ENCODE measurements at regions of chr4 and their contacts with region 1.

Region 1: GRCh38 chr4:113394730-113395530 is 345.5 kb downstream of the ANK2 start:
- DNase-seq: no peak
- H3K4me3 ChIP-seq: no peak overlapping the region
- H3K27ac ChIP-seq: no peak overlapping the region
- H3K4me1 ChIP-seq: peaks cover 4 to 10% of the 10 kb centered on the region in 2 donors
- H3K27me3 ChIP-seq: no peaks in the 10 kb centered on the region
- CTCF ChIP-seq: peak; percentile 74 to 84 (median 84)

Region 2: GRCh38 chr4:113435893-113436292 is 41.0 kb after region 1 on chr4:
- intact Hi-C with region 1: loop called (anchors 5 kb)
- DNase-seq: peak in 1 of 2 donors; percentile 80
- H3K4me3 ChIP-seq: peak overlapping the region in 1 of 2 donors; percentile 1
- H3K27ac ChIP-seq: peak overlapping the region; percentile 51 to 64
- H3K4me1 ChIP-seq: peaks cover 8 to 22% of the 10 kb centered on the region in 2 donors
- H3K27me3 ChIP-seq: no peaks in the 10 kb centered on the region
- CTCF ChIP-seq: no peak

Region 3: DNA sequence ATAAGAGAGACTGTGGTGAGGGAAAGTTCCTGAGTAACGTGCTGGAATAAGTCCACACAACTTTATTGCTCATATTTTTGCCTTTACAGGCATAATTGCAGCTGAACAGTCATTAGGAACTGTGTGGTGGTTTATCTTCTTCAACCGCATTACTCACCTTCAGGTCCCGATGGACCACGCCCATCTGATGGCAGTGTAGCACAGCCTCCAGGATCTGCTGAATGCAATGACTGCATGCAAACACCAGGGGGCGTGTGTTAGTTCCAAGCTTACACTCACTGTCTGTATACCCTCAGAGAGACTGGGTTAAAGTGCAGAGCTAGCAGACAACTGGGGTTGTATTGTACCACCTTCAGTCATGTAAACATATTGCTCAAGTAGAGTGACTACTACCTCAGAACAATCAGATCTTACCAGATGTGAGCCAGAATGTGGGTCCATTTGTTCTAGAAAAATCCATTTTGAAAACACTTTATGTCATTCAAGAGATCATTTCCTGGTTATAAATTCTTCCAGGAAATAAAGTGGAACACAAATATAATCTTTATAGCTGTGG is 152.6 kb after region 1 on chr4:
- intact Hi-C with region 1: loop called (anchors 2 kb)
- DNase-seq: peak; percentile 79 to 94
- H3K4me3 ChIP-seq: peak overlapping the region in 1 of 2 donors; percentile 8
- H3K27ac ChIP-seq: peak overlapping the region; percentile 39 to 53
- H3K4me1 ChIP-seq: peaks cover 0 to 3% of the 10 kb centered on the region in 2 donors
- H3K27me3 ChIP-seq: no peaks in the 10 kb centered on the region
- CTCF ChIP-seq: peak; percentile 93 to 96 (median 95)

Region 4: GRCh38 chr4:113708250-113708649 is 313.3 kb after region 1 on chr4:
- intact Hi-C with region 1: no loop called
- DNase-seq: no peak
- H3K4me3 ChIP-seq: no peak overlapping the region
- H3K27ac ChIP-seq: no peak overlapping the region
- H3K4me1 ChIP-seq: peaks cover 0 to 2% of the 10 kb centered on the region in 2 donors
- H3K27me3 ChIP-seq: no peaks in the 10 kb centered on the region
- CTCF ChIP-seq: no peak

Region 5: DNA sequence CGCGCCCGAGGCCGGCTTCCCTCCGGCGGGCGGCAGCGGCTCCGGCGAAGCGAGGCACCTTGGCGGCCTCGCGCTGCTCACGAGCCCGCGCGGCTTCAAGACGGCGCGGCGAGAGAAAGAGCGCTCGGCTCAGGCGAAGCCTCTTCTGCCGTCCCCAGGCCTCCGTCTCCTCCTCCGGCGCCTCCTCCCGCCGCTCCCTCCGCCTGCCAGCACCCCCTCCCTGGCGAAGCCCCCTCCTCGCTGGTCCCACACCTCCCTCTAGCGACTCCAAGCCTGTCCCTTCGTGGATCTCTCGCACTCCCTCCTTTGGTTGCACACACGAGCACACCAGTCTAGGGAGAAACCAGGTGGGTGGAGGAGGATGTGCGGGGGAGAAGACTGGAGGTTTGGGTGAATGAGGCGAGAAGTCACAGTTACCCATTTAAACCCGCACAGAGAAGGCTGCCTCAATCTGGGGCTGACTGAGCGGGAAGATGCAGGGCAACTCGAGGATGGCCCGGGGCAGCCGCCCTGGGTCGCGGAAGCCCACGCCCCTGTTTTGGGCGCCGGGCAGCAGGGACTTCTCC is 366.8 kb after region 1 on chr4 and contains the start of gene CAMK2D:
- intact Hi-C with region 1: loop called (anchors 2 kb)
- DNase-seq: peak; percentile 60 to 92
- H3K4me3 ChIP-seq: peak within 1 kb of the TSS; percentile 80 to 93
- H3K27ac ChIP-seq: peak within 1 kb of the TSS; percentile 97 to 99
- H3K4me1 ChIP-seq: peaks cover 0 to 16% of the 10 kb centered on the region in 2 donors
- H3K27me3 ChIP-seq: no peaks in the 10 kb centered on the region
- CTCF ChIP-seq: peak; percentile 69 to 89 (median 69)
- total RNA-seq, gene CAMK2D: 23.8 TPM

Region 6: GRCh38 chr4:113969709-113970334 is 574.9 kb after region 1 on chr4:
- intact Hi-C with region 1: loop called (anchors 5 kb)
- DNase-seq: no peak
- H3K4me3 ChIP-seq: no peak overlapping the region
- H3K27ac ChIP-seq: peak overlapping the region; percentile 44 to 64
- H3K4me1 ChIP-seq: peaks cover 0 to 20% of the 10 kb centered on the region in 2 donors
- H3K27me3 ChIP-seq: no peaks in the 10 kb centered on the region
- CTCF ChIP-seq: no peak

Region 7: GRCh38 chr4:114378306-114378903 is 983.5 kb after region 1 on chr4:
- intact Hi-C with region 1: loop called (anchors 5 kb)
- DNase-seq: no peak
- H3K4me3 ChIP-seq: no peak overlapping the region
- H3K27ac ChIP-seq: no peak overlapping the region
- H3K4me1 ChIP-seq: no peaks in the 10 kb centered on the region
- H3K27me3 ChIP-seq: no peaks in the 10 kb centered on the region
- CTCF ChIP-seq: peak in 2 of 3 experiments; percentile 58 to 68

Measured in ascending aorta (tissue), 2 donors.